Dorsolateral prefrontal cortex (tissue), 120 donors: ENCODE measurements at regions of chr14 and their contacts with region 1.

Region 1: GRCh38 chr14:75278422-75279161 is at the start of gene FOS:
- DNase-seq: peak; percentile 82 to 96 (median 94)
- H3K4me3 ChIP-seq: peak within 1 kb of the TSS; percentile 63 to 97 (median 85)
- H3K27ac ChIP-seq: peak within 1 kb of the TSS; percentile 77 to 100 (median 99)
- H3K27me3 ChIP-seq: no peaks in the 10 kb centered on the region
- CTCF ChIP-seq: peak in 4 of 56 donors; percentile 5 to 23 (median 16)
- total RNA-seq, gene FOS: 7.4 to 738 (median 68.8) TPM

Region 2: GRCh38 chr14:75141967-75142366 is 136.6 kb before region 1 on chr14:
- intact Hi-C with region 1: loop called in 1 of 2 experiments (anchors 5 kb)
- DNase-seq: no peak
- H3K4me3 ChIP-seq: no peak overlapping the region
- H3K27ac ChIP-seq: peak overlapping the region in 58 of 59 donors; percentile 1 to 100 (median 99)
- H3K27me3 ChIP-seq: no peaks in the 10 kb centered on the region
- CTCF ChIP-seq: peak in 51 of 56 donors; percentile 19 to 61 (median 45)